ENCODE measurements at regions of chr12 and their contacts with region 1.

Region 1: GRCh38 chr12:100248886-100249285 is 18.0 kb downstream of the DEPDC4 start:
- DNase-seq: no peak
- H3K4me3 ChIP-seq: no peak overlapping the region
- H3K27ac ChIP-seq: no peak overlapping the region
- H3K4me1 ChIP-seq: no peaks in the 10 kb centered on the region
- H3K27me3 ChIP-seq: no peaks in the 10 kb centered on the region
- CTCF ChIP-seq: no peak

Region 2: DNA sequence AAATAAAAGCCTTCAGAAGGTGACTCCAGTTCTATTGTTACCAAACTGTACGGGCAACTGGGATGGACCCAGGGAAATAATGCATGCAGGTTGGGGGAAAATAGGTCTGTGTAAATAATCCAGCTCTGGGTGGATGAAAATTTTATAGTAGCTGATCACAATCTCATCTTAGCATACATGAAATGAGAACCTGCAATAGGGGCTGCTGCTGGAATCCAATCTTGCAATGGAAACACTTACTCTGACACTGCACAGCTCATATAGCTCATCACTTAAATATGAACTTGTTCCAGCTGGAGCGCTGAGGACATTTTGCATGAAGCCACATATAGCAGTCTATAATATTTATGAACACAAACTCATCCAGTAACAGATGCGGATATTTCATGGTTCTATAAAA is 284.5 kb after region 1 on chr12:
- CTCF ChIA-PET with region 1: no interaction called
- POLR2A ChIA-PET with region 1: no interaction called
- intact Hi-C with region 1: no loop called
- DNase-seq: no peak
- H3K4me3 ChIP-seq: no peak overlapping the region
- H3K27ac ChIP-seq: no peak overlapping the region
- H3K4me1 ChIP-seq: no peaks in the 10 kb centered on the region
- H3K27me3 ChIP-seq: peaks cover 74% of the 10 kb centered on the region
- CTCF ChIP-seq: no peak

Region 3: GRCh38 chr12:100545092-100545491 is 296.2 kb after region 1 on chr12:
- CTCF ChIA-PET with region 1: interaction called, 11 read pairs
- POLR2A ChIA-PET with region 1: no interaction called
- intact Hi-C with region 1: no loop called
- DNase-seq: no peak
- H3K4me3 ChIP-seq: no peak overlapping the region
- H3K27ac ChIP-seq: no peak overlapping the region
- H3K4me1 ChIP-seq: no peaks in the 10 kb centered on the region
- H3K27me3 ChIP-seq: peaks cover 67% of the 10 kb centered on the region
- CTCF ChIP-seq: no peak

Measured in PC-9 (cell line).